ENCODE measurements at regions of chr12 and their contacts with region 1.

Region 1: GRCh38 chr12:98516184-98516873 is 939 bp downstream of the TMPO start:
- DNase-seq: peak; percentile 53 to 90 (median 83)
- ATAC-seq: peak; percentile 79
- H3K4me3 ChIP-seq: peak overlapping the region; percentile 92
- H3K4me3 Mint-ChIP-seq: peak overlapping the region; percentile 95 to 100 (median 99)
- H3K27ac ChIP-seq: peak overlapping the region; percentile 95
- H3K27ac Mint-ChIP-seq: peak overlapping the region; percentile 91 to 99 (median 99)
- H3K4me1 ChIP-seq: peaks cover 10 to 26% of the 10 kb centered on the region in 2 donors
- H3K4me1 Mint-ChIP-seq: peaks cover 33 to 69% (median 52%) of the 10 kb centered on the region in 7 donors
- H3K27me3 ChIP-seq: no peaks in the 10 kb centered on the region
- H3K27me3 Mint-ChIP-seq: peaks cover 0 to 1% (median 0%) of the 10 kb centered on the region in 5 donors

Region 2: DNA sequence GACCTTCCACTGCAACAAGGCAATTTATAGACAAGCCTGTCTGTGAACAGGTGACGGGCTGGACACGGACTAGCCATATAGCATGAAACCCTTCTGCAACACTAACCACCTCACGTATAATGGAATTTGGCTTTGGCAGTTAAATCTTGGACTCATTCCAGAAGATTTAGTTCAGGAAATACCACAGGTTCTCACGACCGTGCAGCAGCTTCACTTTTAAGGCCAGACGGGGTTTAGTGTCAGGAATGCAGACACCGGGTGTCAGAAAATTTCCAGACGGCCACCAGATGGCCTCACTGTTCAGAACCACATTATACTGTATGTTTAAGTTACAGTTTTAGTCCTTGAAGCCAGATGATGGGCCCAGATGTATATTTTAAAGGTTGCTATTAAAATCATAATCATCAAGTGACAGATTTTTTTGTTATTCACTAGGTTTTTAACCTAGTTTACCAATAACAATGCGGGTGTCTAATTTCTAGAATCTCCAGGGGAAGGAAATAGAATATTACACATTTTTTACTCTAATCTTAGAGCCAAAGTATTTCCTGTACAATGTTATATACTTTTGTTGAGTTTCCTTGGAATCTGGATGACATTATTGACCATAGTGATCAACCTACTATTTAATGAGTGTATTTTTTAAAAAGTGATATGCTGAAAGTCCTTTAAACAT is 91.5 kb before region 1 on chr12:
- CTCF ChIA-PET with region 1: interaction called, 4 read pairs
- POLR2A ChIA-PET with region 1: no interaction called
- intact Hi-C with region 1: loop called in 1 of 2 experiments (anchors 1 kb)
- DNase-seq: peak; percentile 13 to 52 (median 44)
- ATAC-seq: peak; percentile 83
- H3K4me3 ChIP-seq: no peak overlapping the region
- H3K4me3 Mint-ChIP-seq: no peak overlapping the region
- H3K27ac ChIP-seq: no peak overlapping the region
- H3K27ac Mint-ChIP-seq: no peak overlapping the region
- H3K4me1 ChIP-seq: no peaks in the 10 kb centered on the region
- H3K4me1 Mint-ChIP-seq: peaks cover 0 to 6% (median 5%) of the 10 kb centered on the region in 7 donors
- H3K27me3 ChIP-seq: no peaks in the 10 kb centered on the region
- H3K27me3 Mint-ChIP-seq: peaks cover 0 to 9% (median 0%) of the 10 kb centered on the region in 5 donors

Region 3: DNA sequence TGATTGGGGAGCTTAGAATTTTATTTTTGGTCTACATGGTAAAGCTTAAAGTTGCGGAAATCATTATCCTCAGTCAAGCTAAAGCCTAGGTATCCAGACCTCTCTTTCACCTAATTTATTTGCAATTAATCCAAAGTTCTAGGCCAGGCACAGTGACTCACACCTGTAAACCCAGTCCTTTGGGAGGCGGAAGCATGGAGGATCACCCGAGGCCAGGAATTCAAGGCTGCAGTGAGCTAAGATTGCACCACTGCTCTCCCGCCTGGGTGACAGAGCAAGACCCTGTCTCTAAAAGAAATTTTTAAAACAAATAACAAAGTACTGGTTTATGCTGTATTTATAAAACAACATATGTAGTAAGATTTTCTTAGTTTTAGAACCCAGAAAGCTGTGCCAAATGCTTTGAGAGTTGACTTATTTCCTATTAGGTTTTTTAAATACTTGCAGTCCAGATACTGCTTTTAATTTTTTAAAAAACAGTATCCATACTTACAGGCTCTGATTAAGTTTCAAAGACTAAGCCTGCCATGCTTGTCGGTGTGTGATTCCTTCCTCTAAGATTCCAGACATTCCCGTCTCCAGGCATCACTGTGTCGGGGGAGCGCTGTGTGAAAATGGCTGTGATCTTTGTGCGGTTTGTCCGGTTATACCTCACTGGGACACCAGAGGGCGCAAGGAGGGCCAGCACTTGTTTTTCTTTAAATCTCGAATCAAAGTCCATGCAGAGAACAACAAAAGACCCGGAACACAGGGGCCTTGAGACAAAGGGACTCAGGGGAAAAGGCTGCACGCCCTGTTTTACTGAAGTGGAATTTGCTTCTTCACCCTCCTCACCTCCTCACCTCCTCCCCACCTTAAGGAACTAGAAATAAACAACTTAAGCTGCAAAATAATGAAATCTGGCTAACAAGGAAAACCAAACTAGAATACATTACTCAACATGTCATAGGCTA is 25.6 kb before region 1 on chr12:
- CTCF ChIA-PET with region 1: interaction called, 81 read pairs
- POLR2A ChIA-PET with region 1: interaction called, 143 read pairs
- intact Hi-C with region 1: loop called (anchors 1 kb)
- DNase-seq: peak; percentile 69 to 86 (median 78)
- ATAC-seq: peak; percentile 99
- H3K4me3 ChIP-seq: no peak overlapping the region
- H3K4me3 Mint-ChIP-seq: peak overlapping the region; percentile 21 to 67 (median 54)
- H3K27ac ChIP-seq: peak overlapping the region; percentile 58
- H3K27ac Mint-ChIP-seq: peak overlapping the region; percentile 71 to 98 (median 92)
- H3K4me1 ChIP-seq: peaks cover 0 to 7% of the 10 kb centered on the region in 2 donors
- H3K4me1 Mint-ChIP-seq: peaks cover 0 to 7% (median 6%) of the 10 kb centered on the region in 7 donors
- H3K27me3 ChIP-seq: no peaks in the 10 kb centered on the region
- H3K27me3 Mint-ChIP-seq: peaks cover 0 to 10% (median 0%) of the 10 kb centered on the region in 5 donors

Region 4: DNA sequence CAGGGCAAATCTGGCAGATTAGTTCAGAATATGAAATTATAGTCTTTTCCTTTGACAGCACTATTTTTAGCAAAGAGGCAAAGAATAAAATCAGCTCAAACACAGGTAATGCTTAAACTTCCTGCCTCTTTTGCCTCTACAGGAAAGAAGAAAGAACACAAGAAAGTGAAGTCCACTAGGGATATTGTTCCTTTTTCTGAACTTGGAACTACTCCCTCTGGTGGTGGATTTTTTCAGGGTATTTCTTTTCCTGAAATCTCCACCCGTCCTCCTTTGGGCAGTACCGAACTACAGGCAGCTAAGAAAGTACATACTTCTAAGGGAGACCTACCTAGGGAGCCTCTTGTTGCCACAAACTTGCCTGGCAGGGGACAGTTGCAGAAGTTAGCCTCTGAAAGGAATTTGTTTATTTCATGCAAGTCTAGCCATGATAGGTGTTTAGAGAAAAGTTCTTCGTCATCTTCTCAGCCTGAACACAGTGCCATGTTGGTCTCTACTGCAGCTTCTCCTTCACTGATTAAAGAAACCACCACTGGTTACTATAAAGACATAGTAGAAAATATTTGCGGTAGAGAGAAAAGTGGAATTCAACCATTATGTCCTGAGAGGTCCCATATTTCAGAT is 16.5 kb after region 1 on chr12:
- CTCF ChIA-PET with region 1: interaction called, 6 read pairs
- POLR2A ChIA-PET with region 1: interaction called, 6 read pairs
- intact Hi-C with region 1: loop called (anchors 1 to 2 kb)
- DNase-seq: peak in 7 of 9 donors; percentile 11 to 40 (median 32)
- ATAC-seq: peak; percentile 68
- H3K4me3 ChIP-seq: no peak overlapping the region
- H3K4me3 Mint-ChIP-seq: no peak overlapping the region
- H3K27ac ChIP-seq: no peak overlapping the region
- H3K27ac Mint-ChIP-seq: peak overlapping the region in 2 of 9 donors; percentile 22 to 30
- H3K4me1 ChIP-seq: no peaks in the 10 kb centered on the region
- H3K4me1 Mint-ChIP-seq: peaks cover 4 to 38% (median 17%) of the 10 kb centered on the region in 7 donors
- H3K27me3 ChIP-seq: no peaks in the 10 kb centered on the region
- H3K27me3 Mint-ChIP-seq: no peaks in the 10 kb centered on the region

Region 5: GRCh38 chr12:98653866-98654493 is 137.7 kb after region 1 on chr12:
- CTCF ChIA-PET with region 1: no interaction called
- POLR2A ChIA-PET with region 1: interaction called, 7 read pairs
- intact Hi-C with region 1: loop called in 1 of 2 experiments (anchors 2 kb)
- DNase-seq: peak in 7 of 9 donors; percentile 32 to 69 (median 51)
- ATAC-seq: peak; percentile 64
- H3K4me3 ChIP-seq: no peak overlapping the region
- H3K4me3 Mint-ChIP-seq: no peak overlapping the region
- H3K27ac ChIP-seq: no peak overlapping the region
- H3K27ac Mint-ChIP-seq: peak overlapping the region in 1 of 9 donors; percentile 70
- H3K4me1 ChIP-seq: no peaks in the 10 kb centered on the region
- H3K4me1 Mint-ChIP-seq: peaks cover 4 to 18% (median 12%) of the 10 kb centered on the region in 7 donors
- H3K27me3 ChIP-seq: no peaks in the 10 kb centered on the region
- H3K27me3 Mint-ChIP-seq: no peaks in the 10 kb centered on the region

Region 6: DNA sequence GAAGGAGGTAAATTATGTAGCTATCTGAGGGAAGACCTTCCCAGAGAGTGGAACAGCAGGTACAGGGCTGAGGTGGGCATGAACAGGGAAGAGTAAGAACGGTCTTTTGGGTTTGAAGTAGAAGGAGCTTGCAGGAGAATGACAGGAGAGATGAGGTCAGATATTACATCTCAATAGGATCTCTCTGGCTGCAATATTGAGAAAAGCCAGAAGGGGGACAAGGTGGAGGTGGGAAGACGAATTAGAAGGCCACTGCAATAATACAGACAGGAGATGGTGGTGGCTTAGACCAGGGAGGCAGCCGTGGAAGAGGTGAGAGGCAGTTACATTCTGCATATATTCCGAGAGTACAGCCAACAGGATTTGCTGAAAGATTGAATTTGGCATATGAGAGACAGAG is 438.9 kb after region 1 on chr12:
- CTCF ChIA-PET with region 1: no interaction called
- POLR2A ChIA-PET with region 1: no interaction called
- intact Hi-C with region 1: no loop called
- DNase-seq: no peak
- ATAC-seq: no peak
- H3K4me3 ChIP-seq: no peak overlapping the region
- H3K4me3 Mint-ChIP-seq: no peak overlapping the region
- H3K27ac ChIP-seq: no peak overlapping the region
- H3K27ac Mint-ChIP-seq: no peak overlapping the region
- H3K4me1 ChIP-seq: no peaks in the 10 kb centered on the region
- H3K4me1 Mint-ChIP-seq: no peaks in the 10 kb centered on the region
- H3K27me3 ChIP-seq: no peaks in the 10 kb centered on the region
- H3K27me3 Mint-ChIP-seq: peaks cover 0 to 32% (median 17%) of the 10 kb centered on the region in 5 donors